Panc1 (cell line): ENCODE measurements at regions of chr17 and their contacts with region 1.

Region 1: DNA sequence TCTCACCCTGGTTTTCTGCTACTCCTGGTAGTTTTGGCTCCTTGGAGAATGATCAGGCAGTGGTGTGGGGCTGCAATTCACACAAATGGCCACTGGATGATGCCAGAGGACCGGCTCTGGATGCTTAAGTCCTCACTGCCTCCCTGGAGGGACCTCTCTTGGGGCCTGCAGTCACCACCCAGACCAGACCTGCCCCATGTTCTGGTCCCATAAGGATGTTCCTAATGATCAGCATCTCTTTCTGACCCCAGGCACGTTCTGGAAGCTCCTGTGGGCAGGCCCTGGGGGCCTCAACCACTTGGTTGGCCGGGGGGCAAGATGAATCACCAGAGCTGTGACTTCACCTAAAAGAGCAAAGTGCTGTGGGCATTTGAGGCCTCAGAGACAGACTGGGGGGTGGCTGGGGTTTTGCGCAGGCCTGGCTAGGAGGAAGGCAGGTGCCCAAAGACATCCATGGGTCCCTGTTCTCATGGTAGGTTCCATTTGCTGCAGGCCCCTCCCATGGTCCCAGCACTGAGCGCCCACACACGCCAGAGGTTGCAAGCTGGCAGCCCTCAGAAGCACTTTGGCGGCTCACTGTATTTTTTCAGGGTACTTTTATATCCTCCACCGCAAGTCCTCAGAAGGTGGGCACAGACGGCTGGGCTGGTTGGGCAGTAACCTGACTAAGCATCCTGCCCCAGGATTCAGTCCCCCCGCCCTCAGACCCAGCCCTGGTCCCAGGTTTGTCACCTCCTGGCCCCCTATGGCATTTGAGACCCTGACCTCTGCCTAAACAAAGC is 53.2 kb downstream of the NT5M start:
- DNase-seq: peak; percentile 84
- ATAC-seq: peak; percentile 88
- H3K4me3 ChIP-seq: no peak overlapping the region
- H3K27ac ChIP-seq: no peak overlapping the region
- H3K4me1 ChIP-seq: no peaks in the 10 kb centered on the region
- H3K27me3 ChIP-seq: no peaks in the 10 kb centered on the region
- CTCF ChIP-seq: peak; percentile 100

Region 2: DNA sequence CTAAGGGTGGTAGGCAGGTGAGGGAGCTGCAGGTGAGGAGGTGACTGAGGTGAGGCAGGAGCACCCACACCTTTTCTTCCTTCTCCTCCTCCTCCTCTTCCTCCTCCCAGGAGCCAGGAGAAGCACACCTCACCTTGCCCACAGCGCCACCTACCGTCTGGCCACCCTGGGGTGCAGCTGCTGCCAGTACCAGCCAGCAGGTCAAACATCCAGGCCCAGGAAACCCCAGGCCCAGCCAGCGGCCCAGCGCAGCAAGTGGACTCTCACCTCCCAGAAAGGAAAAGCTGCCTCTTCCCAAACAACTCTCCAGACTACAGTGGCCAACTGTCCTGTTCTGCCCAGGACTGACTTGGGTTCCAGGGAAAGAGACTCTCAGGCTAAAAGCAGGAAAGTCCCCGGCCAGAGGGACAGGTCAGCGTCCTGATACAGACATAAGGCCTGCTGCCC is 212.4 kb after region 1 on chr17:
- CTCF ChIA-PET with region 1: interaction called, 5 read pairs
- POLR2A ChIA-PET with region 1: no interaction called
- in situ Hi-C with region 1: no loop called
- intact Hi-C with region 1: loop called (anchors 5 kb)
- DNase-seq: no peak
- ATAC-seq: peak; percentile 70
- H3K4me3 ChIP-seq: no peak overlapping the region
- H3K27ac ChIP-seq: no peak overlapping the region
- H3K4me1 ChIP-seq: no peaks in the 10 kb centered on the region
- H3K27me3 ChIP-seq: no peaks in the 10 kb centered on the region
- CTCF ChIP-seq: peak; percentile 90

Region 3: GRCh38 chr17:17641621-17642409 is 285.5 kb after region 1 on chr17:
- CTCF ChIA-PET with region 1: no interaction called
- POLR2A ChIA-PET with region 1: interaction called, 11 read pairs
- in situ Hi-C with region 1: no loop called
- intact Hi-C with region 1: loop called (anchors 5 kb)
- DNase-seq: peak; percentile 52
- ATAC-seq: peak; percentile 93
- H3K4me3 ChIP-seq: no peak overlapping the region
- H3K27ac ChIP-seq: no peak overlapping the region
- H3K4me1 ChIP-seq: no peaks in the 10 kb centered on the region
- H3K27me3 ChIP-seq: no peaks in the 10 kb centered on the region
- CTCF ChIP-seq: peak; percentile 87